K562 (cell line): ENCODE measurements at regions of chr12 and their contacts with region 1.

Region 1: GRCh38 chr12:104286538-104287482 is 16.7 kb upstream of the EID3 start:
- DNase-seq: peak; percentile 70 to 98 (median 81)
- ATAC-seq: peak; percentile 89
- H3K4me3 ChIP-seq: peak overlapping the region; percentile 56
- H3K27ac ChIP-seq: peak overlapping the region; percentile 98
- H3K4me1 ChIP-seq: peaks cover 5 to 20% of the 10 kb centered on the region in 2 experiments; a peak in 4 of 5 replicates
- H3K27me3 ChIP-seq: no peaks in the 10 kb centered on the region
- CTCF ChIP-seq: no peak
- EP300 ChIP-seq: peak; percentile 68
- POLR2A ChIP-seq: peak; percentile 99
- RAD21 ChIP-seq: no peak; a peak in 1 of 4 replicates

Region 2: DNA sequence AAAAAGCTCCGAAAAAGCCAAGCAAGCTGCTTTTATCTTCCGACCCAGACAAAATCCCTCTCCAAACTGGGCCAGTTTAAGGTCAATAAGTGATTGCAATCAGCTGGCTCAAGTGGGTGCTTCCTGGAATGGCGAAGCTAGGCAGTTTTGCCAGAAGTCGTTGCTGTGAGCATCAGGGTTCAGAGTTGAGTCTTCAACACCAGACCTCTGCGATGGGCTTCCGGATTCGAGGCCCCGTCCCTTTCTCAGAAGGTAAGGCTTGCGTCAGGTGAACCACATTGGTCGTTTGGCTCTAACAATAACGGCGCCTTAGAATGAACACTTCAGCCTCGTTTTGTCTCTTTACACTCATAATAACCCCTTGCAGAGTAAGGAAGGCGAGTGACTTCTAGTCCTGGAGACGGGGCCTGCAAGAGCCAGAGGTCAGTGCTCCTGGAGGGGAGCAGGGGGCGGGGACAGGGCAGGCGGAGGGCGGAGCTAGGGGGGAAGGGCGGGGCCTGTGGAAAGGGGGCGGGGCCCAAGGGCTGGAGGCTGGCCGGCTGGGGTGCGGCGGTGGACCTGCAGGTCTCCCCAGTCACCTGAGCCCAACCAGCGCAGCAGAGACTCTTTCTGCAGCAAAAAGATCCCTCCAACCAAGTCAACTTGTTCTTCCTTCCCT is 114.9 kb before region 1 on chr12:
- CTCF ChIA-PET with region 1: no interaction called
- POLR2A ChIA-PET with region 1: interaction called, 10 read pairs
- in situ Hi-C with region 1: no loop called
- intact Hi-C with region 1: no loop called
- DNase-seq: peak; percentile 80 to 97 (median 94)
- ATAC-seq: peak; percentile 98
- H3K4me3 ChIP-seq: peak overlapping the region; percentile 13
- H3K27ac ChIP-seq: peak overlapping the region; percentile 89
- H3K4me1 ChIP-seq: peaks cover 5 to 12% of the 10 kb centered on the region in 2 experiments; a peak in 4 of 5 replicates
- H3K27me3 ChIP-seq: no peaks in the 10 kb centered on the region
- CTCF ChIP-seq: no peak
- EP300 ChIP-seq: peak; percentile 47; the same call in 1 of the 2 replicates
- POLR2A ChIP-seq: peak; percentile 63
- RAD21 ChIP-seq: 0 out of 4 replicates have a peak, but pooled peaks of 1 of the 2 experiments have one; percentile 4

Region 3: GRCh38 chr12:104243551-104243950 is 43.3 kb before region 1 on chr12:
- CTCF ChIA-PET with region 1: no interaction called
- POLR2A ChIA-PET with region 1: interaction called, 28 read pairs
- in situ Hi-C with region 1: no loop called
- intact Hi-C with region 1: no loop called
- DNase-seq: no peak
- ATAC-seq: no peak
- H3K4me3 ChIP-seq: no peak overlapping the region
- H3K27ac ChIP-seq: no peak overlapping the region
- H3K4me1 ChIP-seq: peaks cover 0 to 3% of the 10 kb centered on the region in 2 experiments; a peak in 1 of 5 replicates
- H3K27me3 ChIP-seq: no peaks in the 10 kb centered on the region
- CTCF ChIP-seq: no peak
- EP300 ChIP-seq: no peak
- POLR2A ChIP-seq: no peak
- RAD21 ChIP-seq: no peak

Region 4: GRCh38 chr12:104258476-104259067 is 28.2 kb before region 1 on chr12:
- CTCF ChIA-PET with region 1: no interaction called
- POLR2A ChIA-PET with region 1: interaction called, 21 read pairs
- in situ Hi-C with region 1: no loop called
- intact Hi-C with region 1: loop called (anchors 5 kb)
- DNase-seq: no peak
- ATAC-seq: no peak; the same call in 2 of the 3 replicates
- H3K4me3 ChIP-seq: no peak overlapping the region
- H3K27ac ChIP-seq: no peak overlapping the region
- H3K4me1 ChIP-seq: no peaks in the 10 kb centered on the region; a peak in 1 of 5 replicates
- H3K27me3 ChIP-seq: no peaks in the 10 kb centered on the region
- CTCF ChIP-seq: no peak
- EP300 ChIP-seq: no peak
- POLR2A ChIP-seq: no peak
- RAD21 ChIP-seq: no peak

Region 5: GRCh38 chr12:104276273-104277131 is 10.3 kb before region 1 on chr12:
- CTCF ChIA-PET with region 1: no interaction called
- POLR2A ChIA-PET with region 1: interaction called, 60 read pairs
- in situ Hi-C with region 1: no loop called
- intact Hi-C with region 1: no loop called
- DNase-seq: no peak
- ATAC-seq: peak; percentile 65
- H3K4me3 ChIP-seq: no peak overlapping the region
- H3K27ac ChIP-seq: no peak overlapping the region
- H3K4me1 ChIP-seq: peaks cover 5 to 13% of the 10 kb centered on the region in 2 experiments; a peak in 3 of 5 replicates
- H3K27me3 ChIP-seq: no peaks in the 10 kb centered on the region
- CTCF ChIP-seq: no peak
- EP300 ChIP-seq: no peak
- POLR2A ChIP-seq: no peak
- RAD21 ChIP-seq: no peak